OCI-LY7 (cell line): ENCODE measurements at regions of chr6 and their contacts with region 1.

Region 1: GRCh38 chr6:167141667-167142432 is 15.9 kb downstream of the GPR31 start:
- DNase-seq: peak; percentile 75
- H3K4me3 ChIP-seq: no peak overlapping the region
- H3K27ac ChIP-seq: no peak overlapping the region
- H3K4me1 ChIP-seq: peaks cover 28% of the 10 kb centered on the region
- CTCF ChIP-seq: peak; percentile 99

Region 2: DNA sequence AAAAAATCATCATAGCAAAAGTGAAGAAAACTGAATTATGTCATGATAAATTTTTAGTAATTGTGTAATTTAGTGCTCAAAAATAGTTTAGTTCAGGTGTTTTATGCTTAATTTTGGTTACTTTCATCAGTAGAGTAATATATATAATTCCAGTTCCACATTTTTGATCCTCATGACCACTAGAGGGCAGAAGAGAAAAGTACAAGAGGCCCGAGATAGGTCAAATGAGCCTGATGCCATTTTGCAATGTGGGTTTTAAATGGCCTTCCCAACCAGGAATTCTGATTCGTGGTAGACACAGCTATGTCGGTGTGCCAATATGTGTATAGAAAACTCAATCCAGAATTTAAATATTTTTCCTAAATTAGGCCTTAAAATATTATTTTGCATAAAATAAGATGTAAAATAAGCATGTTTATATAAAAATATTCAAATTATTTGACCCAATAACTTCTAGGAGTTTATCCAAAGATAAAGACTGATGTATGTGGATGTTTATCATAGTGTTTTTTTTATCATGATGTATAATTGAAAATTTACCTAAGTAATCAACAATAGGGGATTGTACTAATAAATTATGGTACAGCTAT is 355.1 kb before region 1 on chr6:
- CTCF ChIA-PET with region 1: no interaction called
- POLR2A ChIA-PET with region 1: no interaction called
- intact Hi-C with region 1: loop called (anchors 1 kb)
- DNase-seq: peak; percentile 80
- H3K4me3 ChIP-seq: no peak overlapping the region
- H3K27ac ChIP-seq: no peak overlapping the region
- H3K4me1 ChIP-seq: no peaks in the 10 kb centered on the region
- CTCF ChIP-seq: peak; percentile 97

Region 3: GRCh38 chr6:166999145-166999883 is 142.5 kb before region 1 on chr6 and contains the start of gene CEP43:
- CTCF ChIA-PET with region 1: interaction called, 4 read pairs
- POLR2A ChIA-PET with region 1: interaction called, 7 read pairs
- intact Hi-C with region 1: loop called (anchors 1 kb)
- DNase-seq: peak; percentile 96
- H3K4me3 ChIP-seq: peak within 1 kb of the TSS; percentile 95
- H3K27ac ChIP-seq: peak within 1 kb of the TSS; percentile 65
- H3K4me1 ChIP-seq: peaks cover 33% of the 10 kb centered on the region
- CTCF ChIP-seq: 0 out of 2 replicates have a peak, but pooled peaks have one; percentile 1
- total RNA-seq, gene CEP43: 41.2 and 48.1 TPM in 2 replicates

Region 4: GRCh38 chr6:167113935-167114910 is 27.6 kb before region 1 on chr6:
- CTCF ChIA-PET with region 1: interaction called, 4 read pairs
- POLR2A ChIA-PET with region 1: interaction called, 5 read pairs
- intact Hi-C with region 1: loop called (anchors 2 kb)
- DNase-seq: peak; percentile 96
- H3K4me3 ChIP-seq: peak overlapping the region; percentile 44
- H3K27ac ChIP-seq: peak overlapping the region; percentile 92
- H3K4me1 ChIP-seq: peaks cover 84% of the 10 kb centered on the region
- CTCF ChIP-seq: no peak

Region 5: GRCh38 chr6:167130008-167130677 is 11.7 kb before region 1 on chr6:
- CTCF ChIA-PET with region 1: interaction called, 3 read pairs
- POLR2A ChIA-PET with region 1: interaction called, 34 read pairs
- intact Hi-C with region 1: no loop called
- DNase-seq: peak; percentile 77
- H3K4me3 ChIP-seq: no peak overlapping the region
- H3K27ac ChIP-seq: peak overlapping the region; percentile 33
- H3K4me1 ChIP-seq: peaks cover 29% of the 10 kb centered on the region
- CTCF ChIP-seq: no peak

Region 6: GRCh38 chr6:167306400-167306998 is 164.6 kb after region 1 on chr6:
- CTCF ChIA-PET with region 1: no interaction called
- POLR2A ChIA-PET with region 1: no interaction called
- intact Hi-C with region 1: no loop called
- DNase-seq: no peak
- H3K4me3 ChIP-seq: no peak overlapping the region
- H3K27ac ChIP-seq: no peak overlapping the region
- H3K4me1 ChIP-seq: no peaks in the 10 kb centered on the region
- CTCF ChIP-seq: no peak